Head of caudate nucleus (tissue), 42 donors: ENCODE measurements at regions of chr22 and their contacts with region 1.

Region 1: DNA sequence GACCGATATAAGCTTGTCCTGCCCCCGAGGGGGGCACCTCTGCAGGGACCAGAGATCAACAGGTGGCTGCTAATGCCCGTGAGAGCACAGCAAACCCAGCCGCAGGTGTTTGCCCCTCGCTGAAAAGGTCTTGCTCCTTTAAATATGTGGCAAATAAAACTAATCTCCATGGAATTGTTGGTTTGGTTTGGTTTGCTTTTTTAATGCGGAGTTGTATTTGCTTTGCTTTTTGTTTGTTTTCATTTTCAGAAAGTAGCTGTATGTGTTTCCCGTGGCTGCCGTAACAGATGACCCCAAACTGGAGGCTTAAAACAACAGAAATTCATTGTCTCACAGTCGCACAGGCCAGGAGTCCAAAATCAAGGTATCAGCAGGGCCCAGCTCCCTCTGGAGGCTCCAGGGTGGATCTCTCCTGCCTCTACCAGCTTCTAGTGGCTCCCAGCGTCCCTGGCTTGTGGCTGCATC is 93.0 kb downstream of the CELSR1 start:
- DNase-seq: no peak

Region 2: DNA sequence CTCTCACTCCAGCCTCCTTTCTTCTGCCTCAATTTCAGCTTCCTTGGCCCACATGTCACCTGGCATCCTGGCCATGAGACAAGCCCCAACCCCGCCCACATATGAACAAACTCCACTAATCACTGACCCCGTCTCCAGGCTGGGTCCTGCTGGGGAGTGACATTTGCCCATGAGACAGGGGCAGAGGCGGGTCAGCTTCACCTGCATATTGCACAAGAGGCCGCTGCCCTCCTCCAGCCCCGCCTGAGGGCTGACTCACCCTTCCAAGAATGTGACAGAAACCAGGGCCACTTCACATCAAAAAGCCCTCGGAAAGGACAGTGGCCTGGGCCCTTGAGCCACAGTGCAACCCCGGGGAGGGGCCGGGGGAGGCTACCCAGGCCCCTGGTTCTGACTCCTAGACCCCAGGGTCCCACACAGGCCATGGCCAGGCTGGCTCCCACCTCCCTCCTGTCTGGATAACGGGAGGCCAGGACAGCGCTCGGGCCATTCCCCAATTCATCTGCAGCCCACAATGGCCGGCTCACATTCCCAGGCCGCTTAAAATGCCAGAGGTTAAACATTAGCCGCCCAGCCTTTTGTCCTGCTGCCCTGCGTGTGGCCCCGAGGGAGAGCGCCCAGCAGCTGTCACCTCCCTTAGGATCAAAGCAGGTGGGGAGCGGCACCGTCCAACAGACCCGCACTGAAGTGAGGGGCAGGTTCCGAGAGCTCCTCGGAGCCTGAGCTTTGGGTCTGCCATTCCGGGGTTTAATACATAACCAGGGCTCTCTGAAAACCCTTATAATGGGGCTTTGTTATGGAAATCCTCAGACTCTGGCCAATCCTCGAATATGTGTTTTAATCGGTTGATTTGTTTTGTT is 66.6 kb before region 1 on chr22:
- intact Hi-C with region 1: loop called (anchors 10 kb)
- DNase-seq: no peak